ENCODE measurements at regions of chr11 and their contacts with region 1.

Region 1: DNA sequence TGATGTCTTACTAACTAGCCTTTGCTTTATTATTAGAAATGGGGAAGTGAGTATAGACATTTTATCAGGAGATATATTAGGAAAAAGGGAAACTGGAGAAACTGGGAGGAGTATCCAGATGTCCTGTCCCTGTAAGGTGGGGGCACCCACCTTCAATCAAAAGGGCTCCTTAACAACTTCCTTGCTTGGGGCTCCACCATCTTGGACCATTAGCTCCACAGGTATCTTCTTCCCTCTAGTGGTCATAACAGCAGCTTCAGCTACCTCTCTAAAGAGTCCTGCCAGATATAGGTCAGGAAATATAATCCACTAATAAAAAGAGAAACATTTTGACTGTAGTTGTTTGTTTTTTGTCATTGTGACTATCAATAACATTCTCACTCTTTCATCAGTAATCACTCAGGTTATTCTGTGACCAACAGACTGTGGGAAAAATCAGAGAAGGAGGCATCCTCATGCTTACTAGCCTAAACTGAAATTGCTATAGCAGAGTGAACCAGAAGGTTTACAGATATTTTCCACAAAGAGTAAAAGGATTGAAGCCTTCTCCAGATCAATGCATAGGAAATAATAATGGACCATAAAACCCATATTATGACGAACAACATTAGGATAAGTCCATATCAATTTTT is 10.4 kb downstream of the OR51B4 start:
- DNase-seq: peak; percentile 49 to 88 (median 63)
- ATAC-seq: peak; percentile 81
- H3K4me3 ChIP-seq: no peak overlapping the region
- H3K27ac ChIP-seq: peak overlapping the region; percentile 31
- H3K4me1 ChIP-seq: peaks cover 18 to 50% of the 10 kb centered on the region in 2 experiments; a peak in 4 of 5 replicates
- H3K27me3 ChIP-seq: no peaks in the 10 kb centered on the region
- CTCF ChIP-seq: peak; percentile 80 to 93 (median 89)
- EP300 ChIP-seq: peak; percentile 42; the same call in 1 of the 2 replicates
- POLR2A ChIP-seq: no peak
- RAD21 ChIP-seq: peak; percentile 95 to 98

Region 2: DNA sequence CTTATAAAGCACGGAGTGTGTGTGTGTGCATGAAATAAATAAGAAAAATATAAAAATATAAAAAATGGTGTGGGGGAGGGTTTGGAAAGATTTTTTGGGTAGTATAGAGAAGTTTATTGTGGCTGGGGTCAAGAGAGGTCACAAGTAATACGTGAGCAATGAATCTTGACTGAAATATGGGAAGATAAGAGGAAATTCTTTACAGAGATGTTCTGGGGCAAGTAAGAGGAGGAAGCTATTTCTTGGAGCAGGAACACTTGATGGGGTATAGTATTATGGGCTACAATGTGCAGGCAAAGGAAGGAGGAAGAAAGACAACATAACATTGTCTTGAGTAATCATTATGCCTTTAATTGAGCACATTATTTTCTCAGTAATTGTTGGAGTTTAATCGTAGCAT is 59.1 kb before region 1 on chr11:
- CTCF ChIA-PET with region 1: no interaction called
- POLR2A ChIA-PET with region 1: no interaction called
- in situ Hi-C with region 1: no loop called
- intact Hi-C with region 1: no loop called
- DNase-seq: no peak
- ATAC-seq: no peak
- H3K4me3 ChIP-seq: no peak overlapping the region
- H3K27ac ChIP-seq: no peak overlapping the region
- H3K4me1 ChIP-seq: peaks cover 11 to 35% of the 10 kb centered on the region in 2 experiments
- H3K27me3 ChIP-seq: no peaks in the 10 kb centered on the region
- CTCF ChIP-seq: no peak
- EP300 ChIP-seq: no peak
- POLR2A ChIP-seq: no peak
- RAD21 ChIP-seq: no peak

Region 3: GRCh38 chr11:5242933-5243815 is 48.1 kb before region 1 on chr11:
- CTCF ChIA-PET with region 1: interaction called, 3 read pairs
- POLR2A ChIA-PET with region 1: interaction called, 13 read pairs
- in situ Hi-C with region 1: loop called (anchors 5 kb)
- intact Hi-C with region 1: loop called (anchors 2 kb)
- DNase-seq: peak in 2 of 4 experiments; percentile 59 to 88
- ATAC-seq: peak; percentile 61
- H3K4me3 ChIP-seq: peak overlapping the region; percentile 26
- H3K27ac ChIP-seq: peak overlapping the region; percentile 80
- H3K4me1 ChIP-seq: peaks cover 8 to 36% of the 10 kb centered on the region in 2 experiments
- H3K27me3 ChIP-seq: no peaks in the 10 kb centered on the region
- CTCF ChIP-seq: no peak
- EP300 ChIP-seq: peak; percentile 26; the same call in 1 of the 2 replicates
- POLR2A ChIP-seq: peak; percentile 93
- RAD21 ChIP-seq: no peak

Region 4: GRCh38 chr11:5252192-5252918 is 39.0 kb before region 1 on chr11:
- CTCF ChIA-PET with region 1: no interaction called
- POLR2A ChIA-PET with region 1: interaction called, 30 read pairs
- in situ Hi-C with region 1: no loop called
- intact Hi-C with region 1: loop called (anchors 2 kb)
- DNase-seq: peak in 3 of 4 experiments; percentile 46 to 72 (median 59)
- ATAC-seq: 0 out of 3 replicates have a peak, but pooled peaks have one; percentile 4
- H3K4me3 ChIP-seq: peak overlapping the region; percentile 58
- H3K27ac ChIP-seq: peak overlapping the region; percentile 73
- H3K4me1 ChIP-seq: peaks cover 11 to 20% of the 10 kb centered on the region in 2 experiments
- H3K27me3 ChIP-seq: no peaks in the 10 kb centered on the region
- CTCF ChIP-seq: no peak
- EP300 ChIP-seq: no peak
- POLR2A ChIP-seq: no peak; the same call in none of the 2 replicates
- RAD21 ChIP-seq: no peak

Region 5: GRCh38 chr11:5274395-5274794 is 16.9 kb before region 1 on chr11:
- CTCF ChIA-PET with region 1: interaction called, 3 read pairs
- POLR2A ChIA-PET with region 1: interaction called, 40 read pairs
- in situ Hi-C with region 1: no loop called
- intact Hi-C with region 1: no loop called
- DNase-seq: no peak
- ATAC-seq: no peak
- H3K4me3 ChIP-seq: no peak overlapping the region
- H3K27ac ChIP-seq: peak overlapping the region; percentile 87
- H3K4me1 ChIP-seq: peaks cover 26 to 74% of the 10 kb centered on the region in 2 experiments
- H3K27me3 ChIP-seq: no peaks in the 10 kb centered on the region
- CTCF ChIP-seq: no peak
- EP300 ChIP-seq: no peak
- POLR2A ChIP-seq: no peak
- RAD21 ChIP-seq: no peak

Region 6: GRCh38 chr11:5280582-5281102 is 10.7 kb before region 1 on chr11:
- CTCF ChIA-PET with region 1: no interaction called
- POLR2A ChIA-PET with region 1: interaction called, 15 read pairs
- in situ Hi-C with region 1: no loop called
- intact Hi-C with region 1: no loop called
- DNase-seq: peak; percentile 91 to 100 (median 94)
- ATAC-seq: peak; percentile 86
- H3K4me3 ChIP-seq: no peak overlapping the region
- H3K27ac ChIP-seq: peak overlapping the region; percentile 87
- H3K4me1 ChIP-seq: peaks cover 29 to 86% of the 10 kb centered on the region in 2 experiments
- H3K27me3 ChIP-seq: no peaks in the 10 kb centered on the region
- CTCF ChIP-seq: peak in 1 of 3 experiments; percentile 11; a peak in 1 of 6 replicates
- EP300 ChIP-seq: peak; percentile 99
- POLR2A ChIP-seq: peak; percentile 44; the same call in 1 of the 2 replicates
- RAD21 ChIP-seq: peak; percentile 33 to 34; a peak in 3 of 4 replicates

Region 7: GRCh38 chr11:5317292-5317691 is 26.0 kb after region 1 on chr11:
- CTCF ChIA-PET with region 1: no interaction called
- POLR2A ChIA-PET with region 1: no interaction called
- in situ Hi-C with region 1: no loop called
- intact Hi-C with region 1: no loop called
- DNase-seq: no peak
- ATAC-seq: peak; percentile 57; the same call in 2 of the 3 replicates
- H3K4me3 ChIP-seq: no peak overlapping the region
- H3K27ac ChIP-seq: no peak overlapping the region
- H3K4me1 ChIP-seq: no peaks in the 10 kb centered on the region
- H3K27me3 ChIP-seq: no peaks in the 10 kb centered on the region
- CTCF ChIP-seq: peak in 1 of 3 experiments; percentile 13; a peak in 1 of 6 replicates
- EP300 ChIP-seq: no peak
- POLR2A ChIP-seq: no peak
- RAD21 ChIP-seq: peak in 1 of 2 experiments; percentile 34; a peak in 1 of 4 replicates

Region 8: GRCh38 chr11:5369793-5370192 is 78.5 kb after region 1 on chr11:
- CTCF ChIA-PET with region 1: no interaction called
- POLR2A ChIA-PET with region 1: interaction called, 3 read pairs
- in situ Hi-C with region 1: no loop called
- intact Hi-C with region 1: loop called (anchors 2 kb)
- DNase-seq: peak in 2 of 4 experiments; percentile 42 to 63
- ATAC-seq: peak; percentile 84
- H3K4me3 ChIP-seq: no peak overlapping the region
- H3K27ac ChIP-seq: no peak overlapping the region
- H3K4me1 ChIP-seq: peaks cover 0 to 15% of the 10 kb centered on the region in 2 experiments; a peak in 2 of 5 replicates
- H3K27me3 ChIP-seq: no peaks in the 10 kb centered on the region
- CTCF ChIP-seq: peak; percentile 46 to 68 (median 50); a peak in 4 of 6 replicates
- EP300 ChIP-seq: no peak
- POLR2A ChIP-seq: no peak
- RAD21 ChIP-seq: peak; percentile 72 to 82

Region 9: GRCh38 chr11:5405173-5405572 is 113.8 kb after region 1 on chr11:
- CTCF ChIA-PET with region 1: no interaction called
- POLR2A ChIA-PET with region 1: no interaction called
- in situ Hi-C with region 1: no loop called
- intact Hi-C with region 1: no loop called
- DNase-seq: no peak
- ATAC-seq: no peak
- H3K4me3 ChIP-seq: no peak overlapping the region
- H3K27ac ChIP-seq: no peak overlapping the region
- H3K4me1 ChIP-seq: no peaks in the 10 kb centered on the region
- H3K27me3 ChIP-seq: no peaks in the 10 kb centered on the region
- CTCF ChIP-seq: no peak
- EP300 ChIP-seq: no peak
- POLR2A ChIP-seq: no peak
- RAD21 ChIP-seq: no peak

Region 10: GRCh38 chr11:5556596-5557188 is 265.4 kb after region 1 on chr11:
- CTCF ChIA-PET with region 1: no interaction called
- POLR2A ChIA-PET with region 1: no interaction called
- in situ Hi-C with region 1: no loop called
- intact Hi-C with region 1: loop called (anchors 5 kb)
- DNase-seq: peak in 1 of 4 experiments; percentile 30
- ATAC-seq: peak; percentile 61
- H3K4me3 ChIP-seq: no peak overlapping the region
- H3K27ac ChIP-seq: no peak overlapping the region
- H3K4me1 ChIP-seq: peaks cover 0 to 8% of the 10 kb centered on the region in 2 experiments; a peak in 3 of 5 replicates
- H3K27me3 ChIP-seq: no peaks in the 10 kb centered on the region
- CTCF ChIP-seq: no peak
- EP300 ChIP-seq: no peak
- POLR2A ChIP-seq: no peak
- RAD21 ChIP-seq: no peak